Activated naive CD4-positive, alpha-beta T cell treated with anti-CD3 and anti-CD28 coated beads for 36 hours (primary cell): ENCODE measurements at regions of chr11 and their contacts with region 1.

Region 1: GRCh38 chr11:126355324-126355925 is at the start of gene ST3GAL4:
- DNase-seq: peak; percentile 76
- H3K4me3 Mint-ChIP-seq: peak within 1 kb of the TSS; percentile 91
- H3K27ac Mint-ChIP-seq: peak within 1 kb of the TSS; percentile 82
- H3K4me1 Mint-ChIP-seq: peaks cover 33% of the 10 kb centered on the region
- H3K27me3 Mint-ChIP-seq: no peaks in the 10 kb centered on the region
- total RNA-seq, gene ST3GAL4: 7.6 to 8.0 TPM

Region 2: DNA sequence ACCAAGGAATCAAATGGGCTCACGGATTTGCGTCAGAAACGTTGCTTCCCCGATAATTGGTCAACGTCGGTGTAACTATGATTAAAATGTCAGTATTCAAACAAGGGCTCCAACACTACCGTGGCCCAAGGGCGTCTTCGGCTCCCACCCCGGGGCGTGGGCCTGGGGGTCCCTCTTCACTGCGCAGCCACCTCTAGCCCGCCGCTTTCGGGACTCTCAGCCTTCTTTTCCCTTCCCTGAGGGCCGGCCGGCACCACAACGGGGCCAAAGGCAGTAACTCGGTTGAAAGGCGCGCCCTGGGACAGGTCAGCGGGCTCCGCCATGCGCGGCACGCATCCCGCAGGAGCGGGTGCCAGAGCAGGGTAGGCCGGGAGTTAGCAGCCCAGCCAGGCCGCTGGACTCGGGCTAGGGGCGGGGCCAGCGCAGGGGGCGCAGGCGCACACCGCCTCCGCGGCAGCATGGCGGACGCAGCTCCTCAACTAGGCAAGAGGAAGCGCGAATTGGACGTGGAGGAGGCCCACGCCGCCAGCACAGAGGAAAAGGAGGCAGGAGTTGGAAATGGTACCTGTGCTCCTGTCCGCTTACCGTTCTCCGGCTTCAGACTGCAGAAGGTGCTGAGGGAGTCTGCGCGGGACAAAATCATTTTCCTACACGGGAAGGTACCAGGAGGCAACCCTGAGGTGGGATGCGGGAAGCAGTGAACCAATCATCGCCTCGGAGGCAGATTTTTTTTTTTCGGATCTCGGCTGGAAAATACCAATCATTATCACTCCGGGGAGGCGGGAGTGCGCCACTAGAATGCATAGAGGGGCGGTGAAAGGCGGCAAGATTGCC is 51.6 kb before region 1 on chr11 and contains the start of gene DCPS:
- CTCF ChIA-PET with region 1: no interaction called
- intact Hi-C with region 1: loop called (anchors 1 kb)
- DNase-seq: peak; percentile 86
- H3K4me3 Mint-ChIP-seq: peak within 1 kb of the TSS; percentile 95
- H3K27ac Mint-ChIP-seq: peak within 1 kb of the TSS; percentile 97
- H3K4me1 Mint-ChIP-seq: peaks cover 35% of the 10 kb centered on the region
- H3K27me3 Mint-ChIP-seq: no peaks in the 10 kb centered on the region
- total RNA-seq, gene DCPS: 34.9 to 39.5 TPM

Region 3: DNA sequence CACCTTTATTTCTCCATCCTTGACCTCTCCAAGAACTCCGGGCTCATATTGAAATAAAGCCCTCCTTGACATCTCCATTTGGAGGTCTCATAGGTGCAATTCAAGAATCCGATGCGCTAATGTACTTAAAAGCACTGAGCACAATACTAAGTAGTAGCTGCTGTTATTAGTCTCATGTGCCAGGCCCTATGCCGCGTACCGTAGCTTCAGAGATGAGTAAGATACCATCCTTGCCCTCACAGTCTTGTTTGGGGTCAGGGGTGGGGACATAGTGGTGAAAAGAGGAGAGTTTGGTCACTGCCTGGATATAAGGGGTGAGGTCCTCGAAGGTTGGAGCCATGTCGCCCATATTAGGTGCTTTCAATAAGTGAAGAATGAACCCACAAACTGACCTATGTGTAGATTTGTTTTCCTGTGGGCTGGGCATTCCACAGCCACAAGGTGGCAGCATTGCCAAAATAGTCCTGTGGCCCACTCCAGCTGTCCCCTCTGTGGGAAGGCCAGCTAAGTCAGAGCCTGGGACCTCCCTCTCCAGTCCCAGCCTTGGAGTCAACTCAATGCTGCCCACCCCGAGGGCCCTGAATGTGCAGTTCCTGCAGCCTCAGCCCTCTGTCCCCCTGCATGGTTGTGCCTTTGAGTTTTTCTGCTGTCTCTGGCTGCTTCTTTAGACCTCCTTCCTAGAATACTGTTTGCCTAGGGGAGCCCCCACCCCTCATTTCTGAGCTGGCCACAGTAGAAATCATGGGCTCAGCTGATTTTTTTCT is 45.0 kb before region 1 on chr11:
- CTCF ChIA-PET with region 1: interaction called, 19 read pairs
- intact Hi-C with region 1: no loop called
- DNase-seq: peak; percentile 70
- H3K4me3 Mint-ChIP-seq: no peak overlapping the region
- H3K27ac Mint-ChIP-seq: no peak overlapping the region
- H3K4me1 Mint-ChIP-seq: peaks cover 17% of the 10 kb centered on the region
- H3K27me3 Mint-ChIP-seq: no peaks in the 10 kb centered on the region

Region 4: DNA sequence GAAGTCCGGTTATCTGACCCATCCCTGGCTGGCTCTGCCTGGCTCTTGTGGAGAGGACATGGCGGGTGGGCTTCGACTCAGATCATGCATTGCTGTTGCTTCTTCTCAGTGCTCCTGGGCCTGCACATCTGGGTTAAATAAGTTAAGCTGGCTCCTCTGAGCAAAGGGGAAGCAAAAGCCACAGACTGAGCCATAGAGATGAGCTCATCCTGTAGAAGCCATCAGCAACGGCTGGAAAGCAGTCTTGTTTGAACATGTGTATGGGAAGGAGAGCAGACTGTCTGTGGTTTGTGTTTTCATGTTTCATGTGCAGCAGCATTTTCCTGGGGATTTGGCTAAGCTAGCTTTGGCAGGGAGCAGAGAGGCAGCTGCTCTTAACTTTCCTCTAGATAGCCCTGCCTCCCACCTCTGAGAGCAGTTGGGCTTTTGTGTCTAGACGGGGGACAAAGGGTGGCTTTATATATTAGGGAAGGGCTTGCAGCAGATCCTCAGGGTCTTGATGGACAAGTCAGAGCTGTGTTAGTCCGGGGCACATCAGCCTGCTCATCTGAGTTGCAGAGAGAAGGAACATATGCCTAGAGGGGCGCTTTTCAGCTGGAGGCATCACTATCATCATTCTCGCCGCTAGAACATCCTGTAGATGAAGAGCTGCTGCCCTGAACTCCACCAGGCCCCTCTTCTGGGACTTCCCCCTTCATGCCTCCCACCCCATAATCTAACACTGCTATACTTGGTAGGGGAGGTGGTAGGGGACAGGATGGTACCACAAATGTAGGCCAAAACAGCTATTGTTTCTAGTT is 36.7 kb before region 1 on chr11:
- CTCF ChIA-PET with region 1: interaction called, 5 read pairs
- intact Hi-C with region 1: loop called (anchors 1 kb)
- DNase-seq: peak; percentile 53
- H3K4me3 Mint-ChIP-seq: peak overlapping the region; percentile 44
- H3K27ac Mint-ChIP-seq: peak overlapping the region; percentile 43
- H3K4me1 Mint-ChIP-seq: peaks cover 32% of the 10 kb centered on the region
- H3K27me3 Mint-ChIP-seq: no peaks in the 10 kb centered on the region

Region 5: GRCh38 chr11:126332131-126332711 is 23.2 kb before region 1 on chr11:
- CTCF ChIA-PET with region 1: no interaction called
- intact Hi-C with region 1: no loop called
- DNase-seq: peak; percentile 23
- H3K4me3 Mint-ChIP-seq: no peak overlapping the region
- H3K27ac Mint-ChIP-seq: no peak overlapping the region
- H3K4me1 Mint-ChIP-seq: peaks cover 9% of the 10 kb centered on the region
- H3K27me3 Mint-ChIP-seq: no peaks in the 10 kb centered on the region

Region 6: DNA sequence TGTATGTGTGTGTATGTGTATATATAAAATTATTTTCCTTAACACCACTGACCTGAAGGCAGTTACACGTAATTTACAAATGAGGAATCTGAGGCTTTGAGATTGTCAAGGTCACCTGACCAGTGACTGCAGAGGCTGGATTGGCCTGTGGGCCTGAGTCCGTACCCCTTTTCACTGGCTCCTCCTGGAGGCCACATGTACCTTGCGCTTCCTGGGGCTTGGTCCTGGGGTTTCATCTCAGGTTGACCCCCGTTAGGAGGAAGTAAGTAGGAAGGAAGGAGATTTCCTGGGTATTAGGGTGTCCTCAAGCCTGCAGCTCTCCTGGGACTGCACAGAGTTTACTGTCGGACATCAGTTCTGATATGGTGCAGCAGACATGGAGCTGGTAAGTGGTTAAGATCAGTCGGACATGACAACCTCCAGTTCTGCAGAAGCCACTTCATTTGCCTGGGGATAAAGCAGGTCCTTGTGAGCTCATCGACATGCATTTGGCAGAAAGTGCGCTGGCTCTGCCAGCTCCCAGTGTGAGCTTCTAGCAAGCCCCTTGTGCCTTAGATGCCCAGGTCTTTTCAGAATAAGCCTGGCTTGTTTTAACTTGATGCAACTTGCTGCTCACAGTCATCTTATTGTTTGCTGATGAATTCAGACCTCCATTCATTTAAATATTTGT is 36.7 kb after region 1 on chr11:
- CTCF ChIA-PET with region 1: no interaction called
- intact Hi-C with region 1: no loop called
- DNase-seq: no peak
- H3K4me3 Mint-ChIP-seq: no peak overlapping the region
- H3K27ac Mint-ChIP-seq: no peak overlapping the region
- H3K4me1 Mint-ChIP-seq: peaks cover 2% of the 10 kb centered on the region
- H3K27me3 Mint-ChIP-seq: no peaks in the 10 kb centered on the region

Region 7: DNA sequence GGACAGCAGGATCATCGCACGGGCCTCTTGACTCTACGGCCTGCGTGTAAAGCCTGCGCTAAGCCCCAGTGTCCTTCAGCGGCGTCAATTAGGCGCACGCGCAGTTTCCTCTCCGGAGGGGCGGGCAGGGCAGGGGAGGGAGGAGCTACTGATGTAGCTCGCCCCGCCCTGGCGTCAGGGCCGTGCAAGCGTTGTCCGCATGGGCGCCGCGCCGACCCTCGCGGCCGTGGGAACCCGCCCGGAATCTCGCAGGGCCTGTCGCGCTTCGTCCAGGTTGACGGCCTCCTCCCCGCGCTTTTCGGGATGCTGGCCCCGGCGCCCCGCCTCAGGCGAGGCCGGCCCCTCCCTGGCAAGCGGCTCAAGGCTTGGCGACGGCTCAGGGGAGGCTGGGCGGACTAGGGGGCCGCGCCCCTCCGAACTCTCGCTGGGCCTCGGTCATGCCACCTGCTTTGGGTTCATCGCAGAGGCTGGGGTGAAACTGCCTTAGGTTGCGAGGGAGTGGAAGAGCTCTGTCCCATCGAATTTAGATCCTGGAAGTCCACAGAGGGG is 61.2 kb after region 1 on chr11:
- CTCF ChIA-PET with region 1: no interaction called
- intact Hi-C with region 1: loop called (anchors 5 kb)
- DNase-seq: peak; percentile 83
- H3K4me3 Mint-ChIP-seq: peak overlapping the region; percentile 56
- H3K27ac Mint-ChIP-seq: no peak overlapping the region
- H3K4me1 Mint-ChIP-seq: peaks cover 14% of the 10 kb centered on the region
- H3K27me3 Mint-ChIP-seq: no peaks in the 10 kb centered on the region